OCI-LY7 (cell line): ENCODE measurements at regions of chr13 and their contacts with region 1.

Region 1: GRCh38 chr13:91313103-91313502 is 34.4 kb upstream of the MIR17HG start:
- DNase-seq: peak; percentile 71
- H3K4me3 ChIP-seq: no peak overlapping the region
- H3K27ac ChIP-seq: no peak overlapping the region
- H3K4me1 ChIP-seq: peaks cover 5% of the 10 kb centered on the region
- CTCF ChIP-seq: no peak

Region 2: DNA sequence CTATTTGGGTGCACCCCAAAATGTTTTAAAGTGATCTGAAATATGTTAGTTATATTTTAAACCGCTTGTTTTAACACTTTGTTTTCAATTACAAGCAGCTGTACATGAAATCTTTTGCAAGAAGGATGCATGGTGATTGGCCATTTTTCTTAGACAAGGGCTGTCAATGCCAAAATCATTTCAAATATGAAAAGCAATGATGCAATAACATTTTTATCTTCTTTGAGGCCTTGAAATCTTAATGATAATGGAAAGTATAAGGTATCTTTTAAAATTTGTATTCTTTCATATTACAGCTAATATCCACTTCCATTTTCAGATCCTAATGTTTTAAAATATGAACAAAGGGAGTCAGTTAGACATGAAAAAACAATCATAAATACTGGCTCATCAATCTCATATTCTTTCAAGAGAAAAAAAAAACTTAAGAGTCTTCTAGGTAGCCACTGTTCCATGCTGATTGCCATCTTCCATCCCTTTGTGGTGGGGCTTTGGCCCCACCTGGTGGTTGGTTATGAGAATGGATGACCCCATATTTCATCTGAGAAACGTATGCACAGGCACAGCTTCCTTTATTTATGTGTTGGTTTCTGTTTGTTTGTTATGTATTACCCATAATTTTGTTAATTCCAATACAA is 296.0 kb before region 1 on chr13:
- CTCF ChIA-PET with region 1: no interaction called
- POLR2A ChIA-PET with region 1: no interaction called
- intact Hi-C with region 1: no loop called
- DNase-seq: peak; percentile 88
- H3K4me3 ChIP-seq: no peak overlapping the region
- H3K27ac ChIP-seq: no peak overlapping the region
- H3K4me1 ChIP-seq: no peaks in the 10 kb centered on the region
- CTCF ChIP-seq: no peak

Region 3: DNA sequence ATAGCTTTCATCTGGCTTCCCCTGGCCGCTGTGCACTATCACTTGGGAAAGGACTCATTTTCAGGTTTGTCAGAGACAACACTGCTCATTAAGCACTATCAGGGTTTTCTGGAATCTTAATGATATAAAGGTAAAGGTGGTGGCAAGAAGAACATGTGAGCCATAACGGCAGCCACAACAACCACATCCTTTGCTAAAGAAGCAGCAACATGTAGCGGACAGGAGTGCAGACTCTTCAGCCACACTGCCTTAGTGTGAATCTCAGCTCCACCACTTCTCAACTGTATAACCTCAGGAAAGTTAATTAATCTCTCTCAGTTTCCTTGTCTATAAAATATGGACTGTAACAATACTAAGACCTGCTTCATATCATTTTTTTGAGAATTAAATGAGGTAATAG is 10.2 kb after region 1 on chr13:
- CTCF ChIA-PET with region 1: interaction called, 6 read pairs
- POLR2A ChIA-PET with region 1: interaction called, 35 read pairs
- intact Hi-C with region 1: no loop called
- DNase-seq: no peak
- H3K4me3 ChIP-seq: no peak overlapping the region
- H3K27ac ChIP-seq: no peak overlapping the region
- H3K4me1 ChIP-seq: no peaks in the 10 kb centered on the region
- CTCF ChIP-seq: no peak

Region 4: GRCh38 chr13:91331047-91331915 is 18.2 kb after region 1 on chr13:
- CTCF ChIA-PET with region 1: no interaction called
- POLR2A ChIA-PET with region 1: interaction called, 35 read pairs
- intact Hi-C with region 1: no loop called
- DNase-seq: no peak
- H3K4me3 ChIP-seq: no peak overlapping the region
- H3K27ac ChIP-seq: no peak overlapping the region
- H3K4me1 ChIP-seq: no peaks in the 10 kb centered on the region
- CTCF ChIP-seq: no peak

Region 5: GRCh38 chr13:91348906-91349435 is 35.9 kb after region 1 on chr13:
- CTCF ChIA-PET with region 1: interaction called, 3 read pairs
- POLR2A ChIA-PET with region 1: interaction called, 65 read pairs
- intact Hi-C with region 1: loop called (anchors 2 kb)
- DNase-seq: peak; percentile 100
- H3K4me3 ChIP-seq: peak overlapping the region; percentile 64
- H3K27ac ChIP-seq: peak overlapping the region; percentile 75
- H3K4me1 ChIP-seq: peaks cover 57% of the 10 kb centered on the region
- CTCF ChIP-seq: no peak

Region 6: DNA sequence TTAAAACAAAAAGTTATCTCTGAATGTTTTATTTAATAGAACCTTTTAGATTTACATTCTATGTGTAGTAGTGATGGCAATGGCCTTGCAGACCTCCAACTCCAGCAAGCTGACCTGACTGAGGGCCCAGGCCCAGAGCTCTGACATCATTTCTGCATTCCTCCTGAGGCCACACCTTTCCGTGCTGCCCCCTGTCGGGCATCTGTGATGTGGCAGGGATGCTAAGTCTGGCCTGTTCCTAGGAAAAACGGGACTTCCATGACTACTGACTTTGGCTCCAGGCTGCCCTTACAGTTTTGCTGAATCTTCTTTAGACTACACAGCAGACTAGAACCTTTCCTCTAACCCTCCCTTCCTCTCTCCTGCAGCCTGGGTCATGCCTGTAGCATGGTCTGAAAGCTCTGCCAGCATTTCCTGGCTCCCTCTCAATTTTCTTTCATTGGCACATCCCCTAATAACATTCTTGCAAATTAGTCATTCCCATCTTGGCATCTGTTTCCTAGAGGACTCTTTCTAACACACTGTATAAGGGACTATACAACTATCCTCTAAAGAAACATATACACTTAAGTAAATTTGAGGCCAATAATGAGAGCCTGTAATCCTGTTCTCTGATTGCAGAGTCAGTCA is 334.4 kb after region 1 on chr13:
- CTCF ChIA-PET with region 1: no interaction called
- POLR2A ChIA-PET with region 1: no interaction called
- intact Hi-C with region 1: no loop called
- DNase-seq: peak; percentile 72
- H3K4me3 ChIP-seq: no peak overlapping the region
- H3K27ac ChIP-seq: no peak overlapping the region
- H3K4me1 ChIP-seq: no peaks in the 10 kb centered on the region
- CTCF ChIP-seq: no peak

Region 7: DNA sequence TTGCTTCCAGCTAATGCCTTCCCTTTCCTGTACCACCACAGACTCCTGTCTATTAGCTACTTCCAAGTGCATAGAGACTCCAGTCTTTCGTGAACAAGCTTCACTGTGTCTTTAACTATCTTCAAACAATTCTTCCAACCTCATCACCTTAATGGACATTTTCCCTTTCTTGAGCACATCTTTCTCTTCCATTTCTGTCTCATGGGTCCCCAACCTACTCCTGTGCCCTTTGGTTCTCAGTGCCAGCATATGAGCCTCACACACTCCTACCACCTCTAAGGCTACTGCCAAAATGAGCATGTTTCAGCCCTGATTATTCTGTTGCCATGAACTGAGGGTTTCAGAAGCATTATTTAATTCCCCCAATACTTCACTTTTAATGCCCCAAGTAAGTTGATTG is 445.6 kb after region 1 on chr13:
- CTCF ChIA-PET with region 1: no interaction called
- POLR2A ChIA-PET with region 1: no interaction called
- intact Hi-C with region 1: no loop called
- DNase-seq: no peak
- H3K4me3 ChIP-seq: no peak overlapping the region
- H3K27ac ChIP-seq: no peak overlapping the region
- H3K4me1 ChIP-seq: no peaks in the 10 kb centered on the region
- CTCF ChIP-seq: no peak